PC-9 (cell line): ENCODE measurements at regions of chr1 and their contacts with region 1.

Region 1: DNA sequence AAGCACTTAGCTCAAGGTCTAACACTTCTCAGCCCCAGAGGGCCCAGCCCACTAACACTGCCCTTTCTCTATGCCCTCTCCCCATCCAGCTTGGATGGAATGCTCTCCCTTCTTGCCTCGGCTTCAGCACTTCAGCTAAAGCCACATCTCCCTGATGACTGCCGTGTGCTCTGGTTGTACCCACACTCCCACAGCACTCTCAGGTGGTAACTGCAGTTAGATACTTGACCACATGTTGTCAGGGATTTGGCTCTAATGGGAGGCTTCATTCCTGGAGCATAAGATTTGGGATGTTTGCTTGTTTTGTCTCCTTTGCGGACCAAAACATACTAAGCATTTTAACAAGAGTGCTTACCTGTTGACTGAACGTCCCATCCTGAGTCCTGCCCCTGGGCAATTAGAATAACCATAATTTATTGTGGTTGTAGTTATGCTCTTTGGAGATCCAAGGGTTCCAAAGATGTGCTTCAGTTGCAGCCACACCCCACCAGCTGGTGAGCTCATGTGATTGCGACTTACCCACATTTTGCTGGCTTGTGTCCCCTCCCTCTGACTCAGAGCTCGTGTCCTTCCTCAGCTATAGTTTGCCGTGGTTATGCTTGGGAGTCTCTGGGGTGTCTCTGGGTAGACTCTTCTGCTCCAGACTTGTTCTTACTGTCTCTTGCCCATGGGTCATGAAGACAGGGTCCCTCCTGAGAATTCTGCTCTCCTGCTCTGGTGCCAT is 7.7 kb upstream of the SLC26A9 start:
- DNase-seq: no peak
- H3K4me3 ChIP-seq: no peak overlapping the region
- H3K27ac ChIP-seq: no peak overlapping the region
- H3K4me1 ChIP-seq: peaks cover 32% of the 10 kb centered on the region
- H3K27me3 ChIP-seq: 0 out of 2 replicates have a peak, but pooled peaks cover under 1% of the 10 kb centered on the region
- CTCF ChIP-seq: no peak

Region 2: DNA sequence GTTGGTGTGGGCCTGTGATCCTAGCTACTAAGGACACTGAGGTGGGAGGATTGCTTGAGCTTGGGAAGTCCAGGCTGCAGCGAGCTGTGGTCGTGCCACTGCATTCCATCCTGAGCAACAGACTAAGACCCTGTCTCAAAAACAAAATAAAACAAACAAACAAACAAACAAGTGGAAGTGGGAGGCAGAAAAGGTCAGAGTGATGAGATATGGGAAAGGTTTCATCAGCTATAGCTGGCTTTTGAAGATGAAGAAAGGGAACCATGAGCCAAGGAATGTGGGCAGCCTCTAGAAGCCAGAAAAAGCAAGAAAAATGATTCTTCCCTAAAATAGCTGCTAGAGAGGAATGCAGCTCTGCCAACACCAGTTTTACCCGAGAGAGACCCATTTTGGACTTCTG is 190.4 kb before region 1 on chr1:
- CTCF ChIA-PET with region 1: no interaction called
- POLR2A ChIA-PET with region 1: interaction called, 15 read pairs
- intact Hi-C with region 1: no loop called
- DNase-seq: no peak
- H3K4me3 ChIP-seq: no peak overlapping the region
- H3K27ac ChIP-seq: no peak overlapping the region
- H3K4me1 ChIP-seq: no peaks in the 10 kb centered on the region
- H3K27me3 ChIP-seq: no peaks in the 10 kb centered on the region
- CTCF ChIP-seq: no peak

Region 3: DNA sequence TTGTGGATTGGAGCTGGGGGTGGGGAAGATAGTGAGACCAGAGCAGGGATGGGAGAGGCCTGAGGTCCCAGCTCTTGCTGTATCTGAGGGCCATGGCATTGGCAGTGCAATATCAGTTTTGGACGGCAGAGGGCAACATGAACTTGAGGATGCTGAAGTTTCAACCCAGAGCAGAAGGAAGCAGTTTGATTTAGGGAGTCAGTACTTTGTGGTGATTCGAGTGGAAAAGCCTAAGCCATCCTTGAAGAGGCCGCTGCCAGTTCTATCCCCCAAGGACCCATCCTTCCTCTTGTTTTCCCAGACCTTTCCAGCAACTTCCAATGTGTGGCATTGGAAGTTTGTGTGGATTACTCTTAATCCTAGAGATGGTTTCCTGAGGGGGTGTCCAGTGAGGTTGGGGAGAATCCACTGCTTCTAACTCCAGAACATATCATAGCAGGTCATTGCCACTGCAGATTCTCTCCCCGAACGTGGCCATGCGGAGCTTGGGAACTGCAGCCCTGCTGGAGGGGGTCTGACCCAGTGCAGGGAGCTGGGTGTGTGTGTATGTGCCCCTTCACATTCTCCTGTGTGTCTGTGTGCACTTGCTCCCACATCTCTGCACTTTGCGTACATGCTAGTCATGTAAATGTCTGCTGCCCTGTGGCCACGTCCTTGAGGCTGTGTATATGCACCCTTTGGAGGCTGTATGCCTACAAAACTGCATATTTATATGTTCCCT is 31.8 kb before region 1 on chr1:
- CTCF ChIA-PET with region 1: no interaction called
- POLR2A ChIA-PET with region 1: no interaction called
- intact Hi-C with region 1: no loop called
- DNase-seq: peak; percentile 66 to 76
- H3K4me3 ChIP-seq: no peak overlapping the region
- H3K27ac ChIP-seq: no peak overlapping the region
- H3K4me1 ChIP-seq: no peaks in the 10 kb centered on the region
- H3K27me3 ChIP-seq: no peaks in the 10 kb centered on the region
- CTCF ChIP-seq: peak; percentile 97

Region 4: GRCh38 chr1:205933671-205934618 is 17.0 kb before region 1 on chr1:
- CTCF ChIA-PET with region 1: no interaction called
- POLR2A ChIA-PET with region 1: no interaction called
- intact Hi-C with region 1: loop called (anchors 1 kb)
- DNase-seq: peak; percentile 74 to 99
- H3K4me3 ChIP-seq: peak overlapping the region; percentile 4; the same call in 1 of the 2 replicates
- H3K27ac ChIP-seq: peak overlapping the region; percentile 99
- H3K4me1 ChIP-seq: peaks cover 75% of the 10 kb centered on the region
- H3K27me3 ChIP-seq: no peaks in the 10 kb centered on the region
- CTCF ChIP-seq: no peak

Region 5: GRCh38 chr1:205961405-205961804 is 10.4 kb after region 1 on chr1:
- CTCF ChIA-PET with region 1: no interaction called
- POLR2A ChIA-PET with region 1: no interaction called
- intact Hi-C with region 1: loop called (anchors 2 kb)
- DNase-seq: peak in 1 of 2 experiments; percentile 39
- H3K4me3 ChIP-seq: no peak overlapping the region
- H3K27ac ChIP-seq: peak overlapping the region; percentile 97
- H3K4me1 ChIP-seq: peaks cover 65% of the 10 kb centered on the region
- H3K27me3 ChIP-seq: no peaks in the 10 kb centered on the region
- CTCF ChIP-seq: no peak